ENCODE measurements at regions of chr20 and their contacts with region 1.

Region 1: DNA sequence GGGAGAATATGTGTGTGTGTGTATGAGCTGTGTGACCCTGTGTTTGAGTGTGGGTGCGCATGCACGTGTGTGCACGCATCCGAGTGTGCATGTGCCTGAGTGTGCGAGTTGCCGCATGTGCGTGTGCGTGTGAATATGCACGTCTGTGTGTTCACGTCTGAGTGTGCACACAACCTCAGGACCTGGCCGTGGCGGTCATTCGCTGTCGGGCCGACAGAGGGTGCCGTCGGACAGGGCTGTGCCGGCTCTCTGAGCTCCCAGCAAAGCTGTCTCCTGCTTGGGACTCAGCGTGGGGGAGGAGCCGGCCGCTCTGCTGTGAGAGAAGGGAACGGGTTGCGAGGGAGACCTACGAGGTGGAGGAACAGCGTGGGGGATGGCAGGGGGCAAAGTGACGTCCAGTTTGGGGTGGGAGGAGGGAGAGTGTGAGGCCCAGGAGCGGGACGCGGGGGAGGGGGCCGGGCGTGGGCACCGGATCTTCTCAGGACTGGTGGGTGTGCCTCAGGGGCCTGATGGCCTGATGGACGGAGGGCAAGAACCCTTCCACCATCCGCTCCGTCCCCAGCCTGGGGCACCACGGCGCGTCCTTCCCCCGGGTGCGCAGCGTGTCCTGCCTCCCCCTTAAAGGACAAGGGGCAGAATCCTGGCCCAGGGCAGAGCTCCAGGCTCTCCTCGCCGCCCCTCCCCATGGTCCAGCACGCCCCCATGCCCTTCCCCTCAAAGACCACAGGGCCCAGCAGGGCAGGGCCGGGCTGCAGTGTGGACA is 19.9 kb downstream of the SLC17A9 start:
- DNase-seq: peak; percentile 93
- CTCF ChIP-seq: peak; percentile 97

Region 2: DNA sequence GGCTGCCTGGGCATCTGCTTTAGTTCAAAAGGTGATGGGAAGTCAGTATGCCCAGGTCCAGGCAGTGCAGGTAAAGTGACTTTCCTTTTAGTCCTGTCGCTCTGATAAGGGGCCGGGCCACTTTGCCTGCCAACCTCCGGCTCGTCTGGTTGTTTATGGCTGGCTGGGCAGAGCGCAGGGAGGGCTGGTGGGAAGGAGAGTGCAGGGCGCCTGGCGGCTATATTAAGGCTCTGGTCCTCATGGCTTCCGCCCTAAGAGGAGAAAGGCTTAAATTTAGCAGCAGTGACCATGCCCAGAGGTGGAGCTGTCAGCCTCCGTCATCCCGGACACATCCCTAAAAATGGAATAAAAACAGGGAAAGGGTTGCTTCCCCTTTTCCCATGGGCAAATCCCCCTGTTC is 511.3 kb before region 1 on chr20:
- CTCF ChIA-PET with region 1: no interaction called
- POLR2A ChIA-PET with region 1: no interaction called
- DNase-seq: no peak
- CTCF ChIP-seq: no peak

Region 3: DNA sequence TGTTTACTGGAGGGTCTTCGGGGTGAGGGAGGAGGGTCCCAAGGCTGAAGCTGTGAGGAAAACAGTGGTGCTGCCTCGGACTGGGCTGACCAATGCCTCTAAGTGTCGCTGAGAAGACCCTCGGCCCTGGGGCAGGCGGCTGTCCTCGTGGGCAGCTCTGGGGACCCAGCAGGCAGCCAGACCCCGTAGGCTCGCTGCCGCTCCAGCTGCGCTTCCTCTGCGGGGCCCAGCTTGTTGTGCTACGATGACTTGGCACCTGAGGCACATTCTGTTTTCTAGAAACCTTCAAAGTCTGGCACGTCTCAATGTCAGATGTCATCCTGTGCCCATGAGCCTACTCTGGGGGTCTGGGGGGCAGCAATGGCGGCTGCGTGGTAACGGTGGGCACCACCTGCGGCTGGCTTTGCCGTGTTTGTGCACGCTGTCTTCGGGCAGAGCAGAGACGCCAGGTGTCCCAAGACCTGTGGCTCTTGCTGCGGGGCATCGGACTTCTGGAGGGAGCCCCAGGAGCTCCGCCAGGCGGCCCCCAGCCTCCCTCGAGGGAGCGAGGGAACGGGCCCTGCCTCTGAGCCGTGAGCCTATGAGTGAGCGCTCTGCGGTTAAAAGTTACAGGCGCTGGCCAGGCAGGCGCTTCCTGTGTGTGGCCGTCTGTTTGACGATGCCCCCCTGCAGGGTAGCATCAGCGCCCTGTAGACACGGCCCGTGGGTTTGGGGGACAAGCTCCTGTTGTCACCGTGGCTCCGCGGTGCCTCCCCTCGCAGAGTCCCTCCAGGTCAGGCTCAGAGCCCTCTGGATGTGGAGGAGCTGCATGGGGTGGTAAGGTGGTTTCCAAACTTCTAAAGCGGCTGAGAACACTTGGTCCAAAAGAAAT is 13.1 kb before region 1 on chr20:
- CTCF ChIA-PET with region 1: interaction called, 31 read pairs
- POLR2A ChIA-PET with region 1: interaction called, 7 read pairs
- DNase-seq: no peak
- CTCF ChIP-seq: no peak

Region 4: DNA sequence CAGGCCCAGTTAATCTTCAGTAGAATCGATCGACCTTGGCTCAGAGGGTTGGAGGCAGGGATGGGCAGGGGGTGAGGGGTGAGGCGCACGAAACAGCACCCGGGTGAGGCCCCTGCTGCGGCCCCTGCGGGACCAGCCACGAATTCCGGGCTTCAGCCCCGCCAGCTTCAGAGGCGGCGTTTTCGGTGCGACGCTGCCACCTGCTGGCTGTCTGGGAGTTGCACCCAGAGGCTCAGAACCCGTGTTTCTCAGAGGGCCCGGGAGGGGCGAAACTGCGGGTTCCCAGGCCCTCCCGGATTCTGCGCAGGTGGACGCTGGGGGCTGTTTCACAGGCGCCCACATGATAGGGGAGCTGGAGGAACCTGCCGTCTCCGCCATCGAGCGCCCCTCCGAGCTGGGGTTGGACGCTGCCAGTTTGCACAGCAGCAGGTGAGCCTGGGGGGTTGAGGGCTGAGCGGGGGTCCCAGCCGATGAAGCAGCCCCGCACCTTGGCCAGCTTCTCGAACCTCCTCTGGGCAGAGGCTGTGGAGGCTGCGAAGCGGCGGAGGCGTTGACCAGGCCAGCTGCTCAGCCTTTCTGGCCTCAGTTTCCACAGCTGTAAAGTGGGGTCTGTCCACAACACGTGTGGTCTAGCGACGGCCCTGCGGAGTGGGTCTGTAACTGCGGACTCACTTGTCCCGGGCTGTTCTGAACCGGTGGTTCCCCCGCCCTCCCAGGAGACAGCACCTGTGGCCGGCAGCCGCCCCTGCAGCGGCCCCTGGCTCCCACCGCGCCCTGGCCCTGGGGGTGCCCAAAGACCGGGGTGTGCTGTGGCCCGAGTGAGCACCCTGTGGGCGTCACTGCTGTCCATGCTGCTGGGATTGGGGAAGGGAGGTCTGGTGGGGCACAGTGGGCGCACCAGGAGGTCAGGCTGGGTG is 36.9 kb after region 1 on chr20:
- CTCF ChIA-PET with region 1: interaction called, 26 read pairs
- POLR2A ChIA-PET with region 1: interaction called, 10 read pairs
- DNase-seq: peak; percentile 95
- CTCF ChIP-seq: peak; percentile 99

Region 5: DNA sequence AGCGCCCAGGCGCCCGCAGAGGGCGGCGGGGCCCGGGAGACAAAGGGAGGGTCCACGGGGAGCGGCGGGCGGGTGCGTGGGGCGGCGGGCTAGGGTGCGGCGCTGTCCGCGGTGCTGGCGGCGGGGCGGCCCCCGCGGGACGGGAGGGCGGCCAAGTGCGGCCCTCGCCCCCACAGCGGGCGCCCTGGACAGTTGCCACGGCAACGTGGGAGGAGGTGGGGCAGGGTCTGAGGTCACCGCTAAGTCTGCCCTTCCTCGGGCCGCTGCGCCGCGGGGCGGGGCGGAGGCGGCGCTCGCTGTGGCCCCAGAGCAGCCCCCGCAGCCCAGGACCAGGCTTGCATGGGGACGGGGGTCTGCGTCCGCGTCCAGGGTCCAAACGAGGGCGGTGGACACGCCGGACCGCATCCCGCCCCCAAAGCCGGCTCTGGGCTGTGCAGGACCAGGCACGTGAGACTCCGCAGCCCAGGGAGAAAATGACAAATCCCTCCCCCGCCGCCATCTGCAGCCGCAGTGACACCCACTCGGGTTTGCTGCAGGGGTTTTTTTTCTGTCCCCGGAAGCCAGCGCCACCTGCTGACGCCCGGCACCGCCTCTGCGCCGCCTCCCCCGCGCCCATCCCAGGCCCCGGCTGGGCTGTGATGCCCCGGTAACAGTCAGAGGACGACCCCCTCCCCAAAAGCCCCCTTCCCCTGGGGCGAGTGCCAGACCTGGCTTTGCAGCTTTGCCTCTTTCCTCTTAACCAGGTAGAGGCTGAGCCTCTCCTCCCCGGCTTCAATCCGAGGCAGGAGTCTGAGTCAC is 206.6 kb after region 1 on chr20:
- CTCF ChIA-PET with region 1: interaction called, 15 read pairs
- POLR2A ChIA-PET with region 1: no interaction called
- DNase-seq: peak; percentile 86
- CTCF ChIP-seq: peak; percentile 74